ENCODE measurements at regions of chr3 and their contacts with region 1.

Region 1: DNA sequence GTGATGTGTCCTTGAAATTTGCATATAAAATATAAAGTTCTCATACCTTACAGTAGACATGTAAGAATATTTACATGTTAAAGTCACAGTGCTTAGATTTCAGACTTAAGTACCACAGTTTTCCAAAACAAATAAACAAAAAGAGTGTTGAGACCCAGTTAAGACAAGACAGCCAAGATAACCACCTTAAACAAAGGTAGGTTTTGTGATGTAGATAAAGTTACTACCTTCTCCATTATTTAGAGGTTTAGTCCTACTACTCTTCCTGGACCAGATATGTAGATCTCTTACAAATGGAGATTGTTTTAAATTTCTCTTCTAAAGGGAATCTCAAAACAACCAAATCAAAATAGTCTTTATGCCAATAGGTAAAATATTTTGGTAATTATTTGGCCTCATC is 15.7 kb downstream of the OR5H15 start:
- DNase-seq: no peak
- H3K4me3 ChIP-seq: no peak overlapping the region
- H3K27ac ChIP-seq: no peak overlapping the region
- H3K4me1 ChIP-seq: no peaks in the 10 kb centered on the region
- H3K27me3 ChIP-seq: no peaks in the 10 kb centered on the region
- CTCF ChIP-seq: no peak

Region 2: GRCh38 chr3:98140531-98140930 is 41.7 kb before region 1 on chr3:
- CTCF ChIA-PET with region 1: no interaction called
- POLR2A ChIA-PET with region 1: interaction called, 4 read pairs
- intact Hi-C with region 1: loop called (anchors 2 kb)
- DNase-seq: no peak
- H3K4me3 ChIP-seq: no peak overlapping the region
- H3K27ac ChIP-seq: no peak overlapping the region
- H3K4me1 ChIP-seq: no peaks in the 10 kb centered on the region
- H3K27me3 ChIP-seq: no peaks in the 10 kb centered on the region
- CTCF ChIP-seq: no peak

Region 3: GRCh38 chr3:99627062-99627826 is 1445.0 kb after region 1 on chr3:
- CTCF ChIA-PET with region 1: no interaction called
- POLR2A ChIA-PET with region 1: no interaction called
- intact Hi-C with region 1: no loop called
- DNase-seq: peak in 1 of 2 experiments; percentile 45
- H3K4me3 ChIP-seq: no peak overlapping the region
- H3K27ac ChIP-seq: no peak overlapping the region
- H3K4me1 ChIP-seq: peaks cover 28% of the 10 kb centered on the region
- H3K27me3 ChIP-seq: no peaks in the 10 kb centered on the region
- CTCF ChIP-seq: no peak; the same call in 1 of the 2 replicates